ENCODE measurements at regions of chr7 and their contacts with region 1.

Region 1: GRCh38 chr7:129091484-129092002 is 36.6 kb upstream of the TNPO3 start:
- DNase-seq: peak; percentile 16
- H3K4me3 ChIP-seq: no peak overlapping the region
- H3K27ac ChIP-seq: no peak overlapping the region
- H3K4me1 ChIP-seq: peaks cover 0 to 5% (median 0%) of the 10 kb centered on the region in 3 donors
- H3K27me3 ChIP-seq: peaks cover 0 to 19% (median 0%) of the 10 kb centered on the region in 4 donors
- CTCF ChIP-seq: peak; percentile 93 to 98 (median 96)
- POLR2A ChIP-seq: no peak

Region 2: DNA sequence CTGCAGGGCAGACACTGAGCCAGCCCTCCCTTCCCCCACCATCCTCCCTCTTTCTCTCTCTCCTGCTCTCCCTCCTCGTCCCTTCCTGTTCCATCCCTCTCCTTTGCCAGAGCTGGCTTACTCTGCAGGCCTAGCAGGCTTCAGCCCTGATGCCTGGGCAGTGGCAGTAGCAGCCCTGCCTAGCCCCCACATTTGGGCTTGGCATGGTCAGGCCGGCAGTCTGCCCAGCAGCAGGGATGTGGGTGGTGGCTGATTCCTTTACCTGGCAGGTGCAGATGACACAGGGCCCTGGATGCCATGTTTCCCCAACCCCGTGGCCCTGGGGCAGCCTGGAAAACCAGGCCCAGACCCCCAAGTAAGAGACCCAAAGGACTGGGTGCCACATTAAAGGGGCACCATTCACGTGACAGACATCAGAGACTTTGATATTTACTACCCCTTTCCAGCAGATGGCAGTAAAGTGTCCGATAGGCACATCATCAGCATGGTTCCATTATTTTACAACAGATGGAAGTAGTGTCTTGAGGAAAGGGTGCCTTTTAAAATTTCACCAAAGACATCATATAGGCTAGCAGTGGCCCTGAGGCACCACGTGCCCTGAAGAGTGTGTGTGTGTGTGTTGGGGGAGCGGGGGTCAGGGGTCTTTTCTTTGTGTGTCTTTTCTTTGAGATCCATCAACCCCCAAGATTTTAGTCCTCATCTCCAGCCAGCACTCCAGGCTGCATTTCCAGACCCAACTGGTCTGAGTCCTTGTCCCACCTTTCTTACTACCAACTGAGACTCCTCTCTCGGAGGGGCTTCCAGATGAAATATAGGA is 187.0 kb before region 1 on chr7:
- intact Hi-C with region 1: loop called (anchors 5 kb)
- DNase-seq: no peak
- H3K4me3 ChIP-seq: no peak overlapping the region
- H3K27ac ChIP-seq: no peak overlapping the region
- H3K4me1 ChIP-seq: peaks cover 0 to 29% (median 6%) of the 10 kb centered on the region in 3 donors
- H3K27me3 ChIP-seq: peaks cover 0 to 29% (median 0%) of the 10 kb centered on the region in 4 donors
- CTCF ChIP-seq: peak in 5 of 6 experiments; percentile 55 to 69 (median 57)
- POLR2A ChIP-seq: no peak

Region 3: GRCh38 chr7:129009437-129009836 is 82.1 kb before region 1 on chr7:
- intact Hi-C with region 1: no loop called
- DNase-seq: no peak
- H3K4me3 ChIP-seq: no peak overlapping the region
- H3K27ac ChIP-seq: no peak overlapping the region
- H3K4me1 ChIP-seq: peaks cover 0 to 4% (median 0%) of the 10 kb centered on the region in 3 donors
- H3K27me3 ChIP-seq: no peaks in the 10 kb centered on the region
- CTCF ChIP-seq: no peak
- POLR2A ChIP-seq: no peak